Activated CD8-positive, alpha-beta memory T cell treated with anti-CD3 and anti-CD28 coated beads, Interleukin-2, amount 10 ng/mL, durations not matched to agents 7 days and 5 days (primary cell): ENCODE measurements at regions of chr10 and their contacts with region 1.

Region 1: DNA sequence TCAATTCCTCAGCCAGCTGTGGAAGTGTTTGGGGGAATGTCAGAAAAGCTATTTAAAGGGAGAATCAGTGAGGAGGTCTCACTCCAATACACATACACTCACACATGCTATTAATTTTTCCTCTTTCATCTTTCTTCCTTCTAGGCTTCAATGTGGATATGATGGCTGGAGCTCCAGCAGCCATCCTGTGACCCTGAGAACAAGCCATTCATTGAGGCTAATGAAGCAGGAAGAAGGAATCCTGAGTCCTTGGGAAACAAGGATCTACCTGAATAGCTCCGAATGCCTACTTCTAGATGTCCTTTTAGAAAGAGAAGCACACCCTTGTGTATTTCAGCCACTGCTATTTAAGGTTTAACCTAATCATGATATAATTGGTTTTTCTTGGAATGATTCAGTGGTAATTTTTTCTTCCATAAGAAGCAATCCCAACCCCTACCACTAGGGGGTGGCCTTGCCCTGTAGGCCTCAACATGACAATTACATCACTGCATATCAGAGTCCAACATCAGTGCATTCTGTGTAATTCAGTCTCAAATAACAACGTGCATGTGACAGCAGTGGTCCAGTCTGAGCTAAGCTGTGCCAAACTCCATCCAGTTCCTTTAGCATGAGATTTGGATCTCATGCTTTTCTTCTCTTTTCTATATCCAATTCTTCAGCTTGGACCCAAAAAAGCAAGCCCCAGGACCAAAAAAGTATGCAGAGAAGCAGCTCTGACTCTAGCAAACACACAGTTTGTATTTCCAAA is 85.3 kb upstream of the ANKRD1 start:
- DNase-seq: peak; percentile 75
- ATAC-seq: peak; percentile 71
- H3K4me3 Mint-ChIP-seq: peak overlapping the region; percentile 33
- H3K27ac Mint-ChIP-seq: peak overlapping the region; percentile 66
- H3K4me1 Mint-ChIP-seq: peaks cover 31% of the 10 kb centered on the region
- H3K27me3 Mint-ChIP-seq: peaks cover 33% of the 10 kb centered on the region

Region 2: GRCh38 chr10:91034494-91035159 is 28.5 kb after region 1 on chr10:
- CTCF ChIA-PET with region 1: interaction called, 18 read pairs
- DNase-seq: no peak
- ATAC-seq: no peak
- H3K4me3 Mint-ChIP-seq: no peak overlapping the region
- H3K27ac Mint-ChIP-seq: peak overlapping the region; percentile 78
- H3K4me1 Mint-ChIP-seq: peaks cover 14% of the 10 kb centered on the region
- H3K27me3 Mint-ChIP-seq: peaks cover 18% of the 10 kb centered on the region

Region 3: GRCh38 chr10:91163269-91163868 is 157.2 kb after region 1 on chr10:
- CTCF ChIA-PET with region 1: interaction called, 12 read pairs
- DNase-seq: peak; percentile 85
- ATAC-seq: peak; percentile 66
- H3K4me3 Mint-ChIP-seq: peak overlapping the region; percentile 74
- H3K27ac Mint-ChIP-seq: peak overlapping the region; percentile 83
- H3K4me1 Mint-ChIP-seq: peaks cover 30% of the 10 kb centered on the region
- H3K27me3 Mint-ChIP-seq: no peaks in the 10 kb centered on the region

Region 4: GRCh38 chr10:91632671-91633550 is 626.7 kb after region 1 on chr10 and contains the start of gene PPP1R3C:
- CTCF ChIA-PET with region 1: interaction called, 12 read pairs
- DNase-seq: peak; percentile 65
- ATAC-seq: peak; percentile 88
- H3K4me3 Mint-ChIP-seq: peak within 1 kb of the TSS; percentile 56
- H3K27ac Mint-ChIP-seq: no peak within 1 kb of the TSS
- H3K4me1 Mint-ChIP-seq: peaks cover 8% of the 10 kb centered on the region
- H3K27me3 Mint-ChIP-seq: peaks cover 67% of the 10 kb centered on the region
- total RNA-seq, gene PPP1R3C: not detected